Dendritic cell treated with granulocyte-macrophage colony-stimulating factor and Interleukin-4, amounts not matched to agents 40 ng/mL and 50 ng/mL, for 4 days (primary cell): ENCODE measurements at regions of chrX and their contacts with region 1.

Region 1: GRCh38 chrX:53831662-53832635 is 145.4 kb upstream of the HUWE1 start:
- H3K4me3 Mint-ChIP-seq: no peak overlapping the region
- H3K27ac Mint-ChIP-seq: no peak overlapping the region
- H3K4me1 Mint-ChIP-seq: no peaks in the 10 kb centered on the region
- H3K27me3 Mint-ChIP-seq: no peaks in the 10 kb centered on the region

Region 2: GRCh38 chrX:53678667-53679066 is 153.3 kb before region 1 on chrX:
- intact Hi-C with region 1: loop called (anchors 5 kb)
- H3K4me3 Mint-ChIP-seq: no peak overlapping the region
- H3K27ac Mint-ChIP-seq: no peak overlapping the region
- H3K4me1 Mint-ChIP-seq: peaks cover 11% of the 10 kb centered on the region
- H3K27me3 Mint-ChIP-seq: no peaks in the 10 kb centered on the region